ENCODE measurements at regions of chr4 and their contacts with region 1.

Region 1: GRCh38 chr4:177250056-177250696 is 59.5 kb upstream of the NEIL3 start:
- DNase-seq: peak; percentile 54 to 76
- H3K4me3 ChIP-seq: no peak overlapping the region
- H3K4me3 Mint-ChIP-seq: no peak overlapping the region
- H3K27ac Mint-ChIP-seq: no peak overlapping the region
- H3K4me1 ChIP-seq: no peaks in the 10 kb centered on the region
- H3K4me1 Mint-ChIP-seq: no peaks in the 10 kb centered on the region
- H3K27me3 ChIP-seq: no peaks in the 10 kb centered on the region
- H3K27me3 Mint-ChIP-seq: peaks cover 12% of the 10 kb centered on the region
- CTCF ChIP-seq: peak; percentile 82 to 94

Region 2: DNA sequence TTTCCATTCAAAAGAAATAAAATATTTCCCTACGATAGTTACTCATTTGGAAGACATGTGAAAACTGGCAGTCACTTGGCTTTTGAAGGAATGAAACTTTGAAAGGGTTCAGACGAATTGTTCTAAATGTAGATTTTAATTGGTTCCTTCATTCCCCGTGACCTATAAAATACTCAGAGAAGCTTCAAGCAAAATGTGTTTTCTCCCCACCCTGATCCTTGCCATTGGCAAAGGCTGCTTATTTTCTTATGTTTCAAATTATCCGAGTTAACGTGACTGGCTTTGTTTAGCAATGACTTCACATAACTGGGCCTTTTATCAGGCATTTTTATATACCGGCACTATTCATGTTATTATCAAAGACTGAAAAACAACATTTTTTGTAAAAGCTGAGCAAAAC is 144.6 kb before region 1 on chr4:
- CTCF ChIA-PET with region 1: no interaction called
- POLR2A ChIA-PET with region 1: no interaction called
- intact Hi-C with region 1: no loop called
- DNase-seq: no peak
- H3K4me3 ChIP-seq: no peak overlapping the region
- H3K4me3 Mint-ChIP-seq: no peak overlapping the region
- H3K27ac Mint-ChIP-seq: no peak overlapping the region
- H3K4me1 ChIP-seq: no peaks in the 10 kb centered on the region
- H3K4me1 Mint-ChIP-seq: no peaks in the 10 kb centered on the region
- H3K27me3 ChIP-seq: no peaks in the 10 kb centered on the region
- H3K27me3 Mint-ChIP-seq: no peaks in the 10 kb centered on the region
- CTCF ChIP-seq: no peak

Region 3: DNA sequence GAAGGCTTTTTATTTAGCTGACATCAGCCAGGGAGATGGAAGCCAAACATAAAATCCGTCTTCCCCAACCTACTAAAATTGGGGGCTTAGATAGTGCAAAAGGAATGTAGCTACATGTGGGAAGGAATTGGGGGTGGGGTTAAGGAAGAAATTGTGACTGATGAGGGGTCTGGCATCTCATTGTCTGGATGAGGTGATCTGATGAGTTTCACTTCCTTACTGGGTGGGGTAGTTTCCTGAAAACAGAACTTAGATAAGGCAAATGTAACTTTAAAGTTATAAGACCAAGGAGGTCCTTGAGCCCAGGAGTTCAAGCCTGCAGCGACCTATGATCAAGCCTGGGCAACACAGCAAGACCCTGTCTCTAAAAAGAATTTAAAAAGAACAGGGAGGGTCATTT is 46.0 kb before region 1 on chr4:
- CTCF ChIA-PET with region 1: no interaction called
- POLR2A ChIA-PET with region 1: no interaction called
- intact Hi-C with region 1: no loop called
- DNase-seq: no peak
- H3K4me3 ChIP-seq: no peak overlapping the region
- H3K4me3 Mint-ChIP-seq: no peak overlapping the region
- H3K27ac Mint-ChIP-seq: no peak overlapping the region
- H3K4me1 ChIP-seq: no peaks in the 10 kb centered on the region
- H3K4me1 Mint-ChIP-seq: no peaks in the 10 kb centered on the region
- H3K27me3 ChIP-seq: no peaks in the 10 kb centered on the region
- H3K27me3 Mint-ChIP-seq: no peaks in the 10 kb centered on the region
- CTCF ChIP-seq: no peak

Region 4: GRCh38 chr4:177339477-177340374 is 89.5 kb after region 1 on chr4:
- CTCF ChIA-PET with region 1: interaction called, 19 read pairs
- POLR2A ChIA-PET with region 1: no interaction called
- intact Hi-C with region 1: loop called (anchors 1 kb)
- DNase-seq: no peak
- H3K4me3 ChIP-seq: no peak overlapping the region
- H3K4me3 Mint-ChIP-seq: no peak overlapping the region
- H3K27ac Mint-ChIP-seq: no peak overlapping the region
- H3K4me1 ChIP-seq: no peaks in the 10 kb centered on the region
- H3K4me1 Mint-ChIP-seq: no peaks in the 10 kb centered on the region
- H3K27me3 ChIP-seq: no peaks in the 10 kb centered on the region
- H3K27me3 Mint-ChIP-seq: no peaks in the 10 kb centered on the region
- CTCF ChIP-seq: peak; percentile 50 to 64

Region 5: DNA sequence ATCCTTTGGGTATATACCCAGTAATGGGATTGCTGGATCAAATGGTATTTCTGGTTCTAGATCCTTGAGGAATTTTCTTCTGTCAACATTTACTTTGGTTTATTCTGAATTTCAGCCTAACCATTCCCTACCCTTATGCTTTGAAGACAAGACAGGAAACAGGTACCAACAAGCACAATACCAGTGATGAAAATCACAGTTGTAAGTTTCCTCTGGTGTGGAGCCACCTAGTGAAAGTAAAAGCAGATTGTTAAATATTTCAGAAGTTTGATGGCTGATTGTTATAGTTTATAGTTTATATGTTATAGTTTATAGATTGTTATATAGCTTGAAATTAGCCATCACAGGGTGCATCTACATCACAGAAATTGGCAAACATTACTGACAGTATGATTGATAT is 296.6 kb after region 1 on chr4:
- CTCF ChIA-PET with region 1: no interaction called
- POLR2A ChIA-PET with region 1: no interaction called
- intact Hi-C with region 1: loop called (anchors 2 kb)
- DNase-seq: no peak
- H3K4me3 ChIP-seq: no peak overlapping the region
- H3K4me3 Mint-ChIP-seq: no peak overlapping the region
- H3K27ac Mint-ChIP-seq: no peak overlapping the region
- H3K4me1 ChIP-seq: no peaks in the 10 kb centered on the region
- H3K4me1 Mint-ChIP-seq: no peaks in the 10 kb centered on the region
- H3K27me3 ChIP-seq: no peaks in the 10 kb centered on the region
- H3K27me3 Mint-ChIP-seq: peaks cover 2% of the 10 kb centered on the region
- CTCF ChIP-seq: no peak